CD8-positive, alpha-beta T cell (primary cell): ENCODE measurements at regions of chr12 and their contacts with region 1.

Region 1: DNA sequence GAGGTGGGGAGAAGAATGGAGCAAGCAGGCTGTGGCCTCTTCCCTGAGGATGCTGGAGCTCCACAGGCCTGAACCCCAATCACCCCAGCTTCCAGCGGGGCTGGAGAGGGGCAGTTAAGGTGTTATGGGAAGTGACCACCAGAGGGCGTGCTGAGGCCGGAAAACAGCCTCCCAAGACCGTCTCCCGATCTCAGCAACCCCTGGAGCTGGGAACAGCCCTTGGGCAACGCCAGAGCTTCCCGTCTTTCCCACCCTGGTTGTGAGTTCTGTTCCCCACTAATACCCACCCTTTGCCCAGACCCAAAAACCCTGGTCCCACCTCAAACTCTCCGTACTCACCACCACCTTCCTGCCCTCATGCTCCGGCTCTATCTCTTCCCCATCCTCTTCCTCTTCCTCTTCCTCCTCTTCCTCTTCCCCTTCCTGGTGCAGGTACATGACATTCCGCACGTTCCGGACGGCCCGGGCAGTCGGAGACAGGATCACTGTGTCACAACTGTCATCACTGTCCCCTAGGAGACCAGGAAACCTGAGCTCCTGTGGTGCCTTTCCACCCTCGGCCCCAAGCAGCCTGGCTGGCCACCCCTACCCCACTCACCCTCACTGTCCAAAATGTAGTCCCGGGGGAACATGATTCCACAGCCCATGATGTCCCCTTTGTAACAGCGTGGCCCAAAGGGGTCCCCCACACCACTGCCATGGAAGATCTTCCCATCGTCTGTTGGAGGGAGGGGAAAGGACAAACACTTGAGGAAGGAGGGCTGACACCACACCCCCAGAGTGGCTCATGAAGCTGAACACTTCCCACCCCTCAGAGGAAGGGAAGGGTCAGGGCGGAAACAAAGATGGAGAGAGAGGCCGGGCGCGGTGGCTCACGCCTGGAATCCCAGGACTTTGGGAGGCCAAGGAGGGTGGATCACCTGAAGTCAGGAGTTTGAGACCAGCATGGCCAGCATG is 12.9 kb downstream of the SPRYD3 start:
- DNase-seq: peak; percentile 28 to 82 (median 73)
- ATAC-seq: peak; percentile 74
- H3K4me3 ChIP-seq: no peak overlapping the region
- H3K4me3 Mint-ChIP-seq: no peak overlapping the region
- H3K27ac ChIP-seq: no peak overlapping the region
- H3K27ac Mint-ChIP-seq: peak overlapping the region; percentile 34
- H3K4me1 ChIP-seq: no peaks in the 10 kb centered on the region
- H3K4me1 Mint-ChIP-seq: peaks cover 9% of the 10 kb centered on the region
- H3K27me3 ChIP-seq: no peaks in the 10 kb centered on the region
- H3K27me3 Mint-ChIP-seq: no peaks in the 10 kb centered on the region
- CTCF ChIP-seq: peak; percentile 80

Region 2: DNA sequence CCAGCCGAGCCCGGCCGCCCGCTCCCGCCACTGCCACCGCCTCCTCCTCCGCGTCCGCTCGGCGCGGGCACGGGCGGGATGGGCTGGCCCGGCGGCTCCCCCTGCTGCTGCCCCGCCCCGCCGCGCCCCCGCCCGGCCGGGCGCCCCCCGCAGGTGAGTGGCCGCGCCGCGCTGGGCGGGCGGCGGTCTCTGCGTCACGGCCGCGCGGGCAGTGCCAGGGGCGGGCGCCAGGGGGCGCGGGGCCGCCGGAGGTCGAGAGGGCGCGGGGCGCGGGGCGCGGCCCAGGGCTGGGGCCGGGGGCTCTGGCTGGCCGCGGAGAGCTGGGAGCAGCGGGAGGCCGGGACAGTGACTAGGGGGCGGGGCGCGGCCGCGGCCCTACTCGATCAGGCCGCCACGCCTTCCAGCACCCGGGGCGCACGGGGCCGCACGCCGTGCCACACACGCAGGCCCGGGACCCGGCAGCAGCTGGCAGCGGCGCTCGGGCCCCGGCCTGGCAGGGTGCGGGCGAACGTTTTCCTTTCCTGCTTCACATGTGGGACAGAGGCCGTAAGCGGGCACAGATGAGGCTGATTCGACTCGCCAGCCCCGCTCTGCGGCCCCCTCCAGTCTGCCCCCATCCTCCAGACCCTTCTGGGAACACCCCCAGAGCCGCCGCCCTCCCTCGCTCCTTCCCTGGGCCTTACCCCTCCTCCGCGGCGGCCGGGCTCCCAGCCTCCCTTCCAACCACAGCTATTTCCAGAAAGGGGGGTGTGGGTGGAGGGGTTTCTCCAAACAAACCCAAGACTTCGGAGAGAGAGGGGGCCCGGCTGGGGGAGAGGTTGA is 18.8 kb before region 1 on chr12:
- CTCF ChIA-PET with region 1: interaction called, 24 read pairs
- POLR2A ChIA-PET with region 1: interaction called, 3 read pairs
- intact Hi-C with region 1: no loop called
- DNase-seq: peak; percentile 45 to 85 (median 65)
- ATAC-seq: peak; percentile 85
- H3K4me3 ChIP-seq: peak overlapping the region; percentile 8 to 85
- H3K4me3 Mint-ChIP-seq: peak overlapping the region; percentile 69
- H3K27ac ChIP-seq: peak overlapping the region in 1 of 2 experiments; percentile 70
- H3K27ac Mint-ChIP-seq: peak overlapping the region; percentile 55
- H3K4me1 ChIP-seq: peaks cover 5% of the 10 kb centered on the region
- H3K4me1 Mint-ChIP-seq: peaks cover 11% of the 10 kb centered on the region
- H3K27me3 ChIP-seq: no peaks in the 10 kb centered on the region
- H3K27me3 Mint-ChIP-seq: no peaks in the 10 kb centered on the region
- CTCF ChIP-seq: no peak

Region 3: DNA sequence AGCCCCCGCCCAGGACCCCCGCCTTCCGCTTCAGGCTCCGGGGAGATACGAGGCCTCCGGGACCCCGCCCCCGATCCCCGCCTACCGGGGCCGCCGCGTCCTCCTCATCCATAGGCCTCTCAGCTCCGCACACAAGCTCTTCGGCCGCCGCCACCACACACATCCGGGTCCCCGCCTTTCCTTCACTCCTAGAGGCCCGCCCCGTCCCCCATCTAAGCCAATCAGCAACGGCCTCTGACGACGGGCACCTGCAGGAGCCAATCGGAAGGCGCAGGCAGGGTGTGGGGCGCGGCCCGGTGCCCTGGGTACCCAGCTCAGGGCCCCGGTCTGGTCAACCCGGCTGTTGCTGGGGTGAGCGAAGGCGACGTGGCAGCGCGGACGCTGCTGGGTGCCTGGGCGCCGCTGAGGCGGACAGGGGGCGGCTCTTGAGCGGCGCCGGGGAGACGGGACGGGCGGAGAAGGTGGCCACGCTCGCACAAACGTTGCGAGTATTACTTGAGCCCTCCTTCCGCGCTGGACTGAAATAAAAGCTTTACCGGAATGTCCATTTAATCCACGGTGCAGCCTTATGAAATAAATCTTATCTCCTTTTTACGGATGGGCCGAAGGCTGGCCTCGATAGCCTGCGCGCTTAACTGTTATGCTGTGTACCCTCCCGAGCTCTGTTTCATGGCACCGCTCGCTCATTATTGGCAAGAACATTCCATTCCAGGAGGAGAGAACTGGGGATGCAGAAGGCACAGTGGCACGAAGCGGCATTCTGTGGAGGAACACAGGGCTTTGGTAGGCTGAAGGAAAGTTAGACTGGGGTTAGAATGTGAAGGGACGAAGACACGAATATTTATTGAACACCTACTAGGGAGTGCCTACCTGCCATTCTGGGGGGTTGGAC is 13.2 kb after region 1 on chr12 and contains the start of gene SPRYD3:
- CTCF ChIA-PET with region 1: interaction called, 92 read pairs
- POLR2A ChIA-PET with region 1: interaction called, 7 read pairs
- intact Hi-C with region 1: loop called in 1 of 2 experiments (anchors 1 kb)
- DNase-seq: peak; percentile 95 to 98 (median 96)
- ATAC-seq: peak; percentile 94
- H3K4me3 ChIP-seq: peak within 1 kb of the TSS; percentile 66 to 92
- H3K4me3 Mint-ChIP-seq: peak within 1 kb of the TSS; percentile 92
- H3K27ac ChIP-seq: peak within 1 kb of the TSS; percentile 75 to 89
- H3K27ac Mint-ChIP-seq: peak within 1 kb of the TSS; percentile 96
- H3K4me1 ChIP-seq: peaks cover 13% of the 10 kb centered on the region
- H3K4me1 Mint-ChIP-seq: peaks cover 41% of the 10 kb centered on the region
- H3K27me3 ChIP-seq: no peaks in the 10 kb centered on the region
- H3K27me3 Mint-ChIP-seq: no peaks in the 10 kb centered on the region
- CTCF ChIP-seq: no peak
- total RNA-seq, gene SPRYD3: 25.1 to 25.6 TPM

Region 4: DNA sequence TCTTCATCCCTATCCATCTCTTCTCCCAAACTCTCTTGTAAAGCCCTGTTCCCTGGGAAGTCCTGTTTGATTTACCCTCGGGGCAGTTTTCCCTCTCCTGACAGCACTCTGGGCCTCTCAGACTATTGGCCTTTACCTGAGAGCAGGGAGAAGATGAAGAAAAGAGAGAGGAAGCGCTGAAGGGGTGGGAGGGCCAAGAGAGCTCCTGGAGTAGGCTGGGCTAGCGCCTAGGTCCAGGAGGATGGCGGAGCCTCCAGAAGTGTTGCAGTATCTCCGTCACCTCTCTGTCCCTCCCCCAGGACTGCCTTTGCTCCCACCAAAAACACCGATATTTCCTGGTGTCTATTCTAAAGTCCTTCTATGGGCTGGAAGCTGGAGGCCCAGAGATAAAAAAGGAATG is 25.5 kb after region 1 on chr12:
- CTCF ChIA-PET with region 1: interaction called, 366 read pairs
- POLR2A ChIA-PET with region 1: interaction called, 4 read pairs
- intact Hi-C with region 1: no loop called
- DNase-seq: no peak
- ATAC-seq: no peak
- H3K4me3 ChIP-seq: no peak overlapping the region
- H3K4me3 Mint-ChIP-seq: no peak overlapping the region
- H3K27ac ChIP-seq: no peak overlapping the region
- H3K27ac Mint-ChIP-seq: no peak overlapping the region
- H3K4me1 ChIP-seq: no peaks in the 10 kb centered on the region
- H3K4me1 Mint-ChIP-seq: peaks cover 3% of the 10 kb centered on the region
- H3K27me3 ChIP-seq: no peaks in the 10 kb centered on the region
- H3K27me3 Mint-ChIP-seq: peaks cover 9% of the 10 kb centered on the region
- CTCF ChIP-seq: no peak

Region 5: GRCh38 chr12:53190108-53190729 is 124.0 kb after region 1 on chr12:
- CTCF ChIA-PET with region 1: interaction called, 14 read pairs
- POLR2A ChIA-PET with region 1: no interaction called
- intact Hi-C with region 1: loop called in 1 of 2 experiments (anchors 2 kb)
- DNase-seq: peak in 8 of 9 experiments; percentile 32 to 71 (median 66)
- ATAC-seq: peak; percentile 99
- H3K4me3 ChIP-seq: no peak overlapping the region
- H3K4me3 Mint-ChIP-seq: no peak overlapping the region
- H3K27ac ChIP-seq: peak overlapping the region in 1 of 2 experiments; percentile 29
- H3K27ac Mint-ChIP-seq: peak overlapping the region; percentile 66
- H3K4me1 ChIP-seq: peaks cover 10% of the 10 kb centered on the region
- H3K4me1 Mint-ChIP-seq: peaks cover 30% of the 10 kb centered on the region
- H3K27me3 ChIP-seq: no peaks in the 10 kb centered on the region
- H3K27me3 Mint-ChIP-seq: no peaks in the 10 kb centered on the region
- CTCF ChIP-seq: peak; percentile 47

Region 6: GRCh38 chr12:53287741-53288216 is 221.5 kb after region 1 on chr12:
- CTCF ChIA-PET with region 1: interaction called, 10 read pairs
- POLR2A ChIA-PET with region 1: no interaction called
- intact Hi-C with region 1: loop called in 1 of 2 experiments (anchors 10 kb)
- DNase-seq: peak; percentile 42 to 86 (median 75)
- ATAC-seq: peak; percentile 96
- H3K4me3 ChIP-seq: no peak overlapping the region
- H3K4me3 Mint-ChIP-seq: no peak overlapping the region
- H3K27ac ChIP-seq: no peak overlapping the region
- H3K27ac Mint-ChIP-seq: no peak overlapping the region
- H3K4me1 ChIP-seq: no peaks in the 10 kb centered on the region
- H3K4me1 Mint-ChIP-seq: peaks cover 4% of the 10 kb centered on the region
- H3K27me3 ChIP-seq: no peaks in the 10 kb centered on the region
- H3K27me3 Mint-ChIP-seq: no peaks in the 10 kb centered on the region
- CTCF ChIP-seq: peak; percentile 62

Region 7: GRCh38 chr12:53441040-53441833 is 375.0 kb after region 1 on chr12 and contains the start of gene PRR13:
- CTCF ChIA-PET with region 1: no interaction called
- POLR2A ChIA-PET with region 1: no interaction called
- intact Hi-C with region 1: no loop called
- DNase-seq: peak; percentile 95 to 99 (median 99)
- ATAC-seq: peak; percentile 95
- H3K4me3 ChIP-seq: peak within 1 kb of the TSS; percentile 86 to 98
- H3K4me3 Mint-ChIP-seq: peak within 1 kb of the TSS; percentile 97
- H3K27ac ChIP-seq: peak within 1 kb of the TSS; percentile 85 to 94
- H3K27ac Mint-ChIP-seq: peak within 1 kb of the TSS; percentile 97
- H3K4me1 ChIP-seq: peaks cover 36% of the 10 kb centered on the region
- H3K4me1 Mint-ChIP-seq: peaks cover 46% of the 10 kb centered on the region
- H3K27me3 ChIP-seq: no peaks in the 10 kb centered on the region
- H3K27me3 Mint-ChIP-seq: no peaks in the 10 kb centered on the region
- CTCF ChIP-seq: no peak
- total RNA-seq, gene PRR13: 131 to 155 TPM